ENCODE measurements at regions of chr5 and their contacts with region 1.

Region 1: GRCh38 chr5:173293817-173294672 is 34.2 kb downstream of the STC2 start:
- DNase-seq: peak; percentile 93
- H3K4me3 Mint-ChIP-seq: peak overlapping the region; percentile 45
- H3K27ac Mint-ChIP-seq: no peak overlapping the region
- H3K4me1 Mint-ChIP-seq: peaks cover 16% of the 10 kb centered on the region
- H3K27me3 Mint-ChIP-seq: peaks cover 52% of the 10 kb centered on the region

Region 2: DNA sequence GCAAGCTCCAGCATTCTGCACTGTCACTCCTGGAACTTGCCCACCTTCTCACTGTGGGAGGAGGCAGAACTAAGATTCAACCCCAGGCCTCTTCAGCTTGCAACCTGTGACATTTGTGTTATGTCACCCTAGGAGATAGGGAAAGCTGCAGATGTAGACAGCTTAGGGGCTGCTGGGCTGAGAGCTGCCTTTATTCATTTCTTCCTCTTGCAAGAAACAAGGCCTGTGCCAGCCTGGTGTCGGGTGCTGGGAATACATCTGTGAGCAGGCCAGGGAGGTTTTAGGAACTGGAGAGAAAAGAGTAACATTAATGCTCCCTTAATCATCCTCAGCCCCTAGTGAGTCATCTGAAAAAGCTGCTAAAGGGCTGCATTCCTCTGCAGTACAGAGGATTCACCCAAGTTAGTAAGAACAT is 1772.8 kb before region 1 on chr5:
- intact Hi-C with region 1: no loop called
- DNase-seq: no peak
- H3K4me3 Mint-ChIP-seq: no peak overlapping the region
- H3K27ac Mint-ChIP-seq: no peak overlapping the region
- H3K4me1 Mint-ChIP-seq: no peaks in the 10 kb centered on the region
- H3K27me3 Mint-ChIP-seq: no peaks in the 10 kb centered on the region

Region 3: DNA sequence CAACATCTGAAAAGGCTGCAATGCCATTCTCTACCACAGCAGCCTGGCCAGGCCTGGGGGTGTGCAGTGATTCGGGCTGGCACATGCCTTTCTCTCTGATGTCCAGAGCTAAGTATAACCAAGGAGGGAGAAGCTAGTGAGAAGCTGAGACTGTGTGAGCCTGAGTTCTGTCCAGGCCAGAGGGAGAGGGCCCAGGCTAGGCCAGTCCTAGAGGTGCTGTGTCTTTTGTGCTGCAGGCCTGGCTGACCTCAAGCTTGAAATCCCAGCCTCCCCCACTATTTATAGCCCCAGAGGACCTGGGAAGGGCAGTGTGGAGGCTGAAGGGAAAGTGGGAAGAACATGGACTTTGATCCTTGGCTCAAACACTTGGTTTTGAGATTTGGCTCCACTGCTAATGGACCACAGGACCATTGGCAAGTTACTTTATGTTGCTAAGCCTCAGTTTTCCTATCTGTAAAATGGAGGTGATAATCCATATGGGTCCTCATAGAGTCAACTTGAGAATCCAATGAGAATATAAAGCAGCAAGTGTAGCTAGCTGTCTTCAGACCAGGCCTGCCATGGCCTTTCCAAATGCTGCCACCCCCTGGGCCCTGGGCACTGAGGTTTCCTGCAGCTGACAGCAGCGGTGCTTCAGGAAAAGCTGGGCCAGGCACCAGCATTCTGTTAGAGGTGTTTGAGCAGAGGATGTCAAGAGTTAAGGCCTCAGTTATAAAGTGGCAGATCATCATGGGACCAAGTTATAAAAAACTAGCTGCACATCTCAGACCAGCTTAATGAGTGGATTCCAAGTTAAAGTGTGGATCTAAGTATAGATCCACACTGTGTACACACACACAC is 128.6 kb before region 1 on chr5:
- intact Hi-C with region 1: no loop called
- DNase-seq: no peak
- H3K4me3 Mint-ChIP-seq: no peak overlapping the region
- H3K27ac Mint-ChIP-seq: no peak overlapping the region
- H3K4me1 Mint-ChIP-seq: no peaks in the 10 kb centered on the region
- H3K27me3 Mint-ChIP-seq: no peaks in the 10 kb centered on the region

Region 4: GRCh38 chr5:173573126-173573960 is 279.3 kb after region 1 on chr5:
- intact Hi-C with region 1: loop called (anchors 1 kb)
- DNase-seq: peak; percentile 89
- H3K4me3 Mint-ChIP-seq: no peak overlapping the region
- H3K27ac Mint-ChIP-seq: no peak overlapping the region
- H3K4me1 Mint-ChIP-seq: peaks cover 3% of the 10 kb centered on the region
- H3K27me3 Mint-ChIP-seq: peaks cover 16% of the 10 kb centered on the region

Measured in activated CD4-positive, alpha-beta T cell treated with anti-CD3 and anti-CD28 coated beads, Interleukin-2, amount 10 ng/mL, durations not matched to agents 24 days and 14 days (primary cell).